Endothelial cell of umbilical vein (primary cell): ENCODE measurements at regions of chr4 and their contacts with region 1.

Region 1: DNA sequence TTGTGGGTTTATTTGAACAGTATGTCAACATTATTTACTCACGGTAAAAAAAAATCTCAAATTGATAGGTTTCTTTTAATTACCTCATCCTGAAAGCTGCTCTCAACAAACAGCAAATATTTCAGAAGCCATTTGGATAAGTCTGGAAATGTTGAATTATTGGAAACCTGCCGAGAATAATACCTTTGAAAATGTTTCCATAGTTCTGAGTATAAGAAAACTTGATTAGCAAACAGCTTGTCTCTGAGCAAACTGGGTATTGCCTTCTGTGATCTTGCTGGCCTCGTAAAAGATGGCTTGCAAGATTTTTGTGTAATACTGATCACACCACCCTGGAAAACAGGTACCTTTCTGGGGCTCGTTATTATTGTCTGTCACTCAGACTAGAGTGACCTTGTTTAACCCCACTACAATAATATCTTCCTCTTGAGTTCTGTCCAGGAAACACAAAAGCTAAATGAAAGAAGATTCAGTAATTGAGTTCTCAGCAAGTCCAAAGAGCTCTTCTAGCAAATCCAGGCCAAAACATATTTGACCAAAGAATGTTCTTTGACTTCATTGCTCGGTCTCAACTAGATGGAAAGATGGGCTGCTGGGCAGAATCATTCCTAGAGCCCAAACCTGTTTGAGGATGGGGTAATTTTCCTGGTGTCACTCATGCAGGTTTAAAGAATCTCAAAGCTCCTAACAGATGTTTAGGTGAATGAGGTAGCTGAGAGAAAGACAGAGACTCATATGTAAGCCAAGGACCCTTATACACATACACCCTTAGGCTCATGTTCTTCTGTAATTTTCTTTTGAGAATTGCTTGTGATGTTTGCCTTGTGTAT is 255.6 kb upstream of the JADE1 start:
- DNase-seq: peak; percentile 68
- H3K4me3 ChIP-seq: peak overlapping the region in 2 of 3 experiments; percentile 21 to 60
- H3K27ac ChIP-seq: peak overlapping the region; percentile 86
- H3K4me1 ChIP-seq: peaks cover 22% of the 10 kb centered on the region
- H3K27me3 ChIP-seq: no peaks in the 10 kb centered on the region
- CTCF ChIP-seq: no peak
- POLR2A ChIP-seq: no peak

Region 2: DNA sequence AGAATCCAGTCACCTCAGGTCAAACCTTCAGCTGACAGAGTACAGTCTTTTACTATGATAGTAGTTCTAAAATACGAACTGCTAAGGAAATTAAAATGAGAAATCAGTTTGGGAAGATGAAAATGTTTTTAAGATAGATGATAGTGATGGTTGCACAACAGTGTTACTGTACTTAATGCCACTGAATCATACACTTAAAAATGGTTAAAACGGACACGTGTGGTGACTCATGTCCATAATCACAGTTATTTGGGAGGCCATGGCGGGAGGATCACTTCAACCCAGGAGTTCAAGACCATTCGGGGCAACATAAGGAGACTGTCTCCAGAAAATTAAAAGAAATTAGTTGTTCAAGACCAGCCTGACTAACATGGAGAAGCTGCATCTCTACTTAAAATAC is 547.3 kb before region 1 on chr4:
- CTCF ChIA-PET with region 1: no interaction called
- POLR2A ChIA-PET with region 1: no interaction called
- dilution Hi-C with region 1: no loop called
- intact Hi-C with region 1: no loop called
- DNase-seq: no peak
- H3K4me3 ChIP-seq: no peak overlapping the region
- H3K27ac ChIP-seq: no peak overlapping the region
- H3K4me1 ChIP-seq: no peaks in the 10 kb centered on the region
- H3K27me3 ChIP-seq: no peaks in the 10 kb centered on the region
- CTCF ChIP-seq: no peak
- POLR2A ChIP-seq: no peak

Region 3: GRCh38 chr4:128528793-128529553 is 24.9 kb before region 1 on chr4:
- CTCF ChIA-PET with region 1: interaction called, 18 read pairs
- POLR2A ChIA-PET with region 1: interaction called, 15 read pairs
- dilution Hi-C with region 1: no loop called
- intact Hi-C with region 1: no loop called
- DNase-seq: peak; percentile 88
- H3K4me3 ChIP-seq: no peak overlapping the region
- H3K27ac ChIP-seq: peak overlapping the region; percentile 95
- H3K4me1 ChIP-seq: peaks cover 29% of the 10 kb centered on the region
- H3K27me3 ChIP-seq: no peaks in the 10 kb centered on the region
- CTCF ChIP-seq: no peak
- POLR2A ChIP-seq: no peak

Region 4: GRCh38 chr4:128565565-128566186 is 11.8 kb after region 1 on chr4:
- CTCF ChIA-PET with region 1: interaction called, 13 read pairs
- POLR2A ChIA-PET with region 1: no interaction called
- dilution Hi-C with region 1: no loop called
- intact Hi-C with region 1: no loop called
- DNase-seq: peak; percentile 51
- H3K4me3 ChIP-seq: no peak overlapping the region
- H3K27ac ChIP-seq: no peak overlapping the region
- H3K4me1 ChIP-seq: peaks cover 17% of the 10 kb centered on the region
- H3K27me3 ChIP-seq: no peaks in the 10 kb centered on the region
- CTCF ChIP-seq: peak; percentile 56 to 68
- POLR2A ChIP-seq: no peak

Region 5: DNA sequence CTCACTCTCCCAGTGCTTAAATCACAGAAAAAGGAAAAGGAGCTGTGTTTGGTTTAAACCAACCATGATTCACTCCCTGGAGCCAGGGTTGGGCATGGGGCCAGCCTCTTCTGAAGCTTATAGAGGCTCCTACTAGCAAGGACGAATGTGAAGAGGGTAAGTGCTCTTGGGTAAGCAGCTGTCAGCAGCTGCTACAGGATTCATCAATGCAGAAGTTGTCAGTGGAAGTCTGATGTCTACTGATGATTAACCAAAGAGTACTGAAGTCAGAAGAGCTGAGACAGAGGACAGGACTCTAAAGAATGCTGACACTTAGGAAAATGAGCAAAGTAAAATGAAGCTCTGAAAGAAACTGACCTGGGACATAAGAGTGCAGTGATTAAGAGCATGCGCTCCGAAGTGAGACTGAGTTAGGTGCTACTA is 222.9 kb after region 1 on chr4:
- CTCF ChIA-PET with region 1: no interaction called
- POLR2A ChIA-PET with region 1: no interaction called
- dilution Hi-C with region 1: no loop called
- intact Hi-C with region 1: no loop called
- DNase-seq: peak; percentile 70
- H3K4me3 ChIP-seq: no peak overlapping the region
- H3K27ac ChIP-seq: no peak overlapping the region
- H3K4me1 ChIP-seq: no peaks in the 10 kb centered on the region
- H3K27me3 ChIP-seq: no peaks in the 10 kb centered on the region
- CTCF ChIP-seq: no peak
- POLR2A ChIP-seq: no peak